Naive thymus-derived CD4-positive, alpha-beta T cell (primary cell): ENCODE measurements at regions of chr11 and their contacts with region 1.

Region 1: GRCh38 chr11:65988791-65989592 is 13.0 kb downstream of the EIF1AD start:
- DNase-seq: peak; percentile 66 to 95 (median 91)
- ATAC-seq: peak; percentile 100
- H3K4me3 ChIP-seq: no peak overlapping the region
- H3K4me3 Mint-ChIP-seq: no peak overlapping the region
- H3K27ac ChIP-seq: no peak overlapping the region
- H3K27ac Mint-ChIP-seq: peak overlapping the region; percentile 0 to 90 (median 74)
- H3K4me1 ChIP-seq: no peaks in the 10 kb centered on the region
- H3K4me1 Mint-ChIP-seq: peaks cover 5 to 7% (median 6%) of the 10 kb centered on the region in 7 donors
- H3K27me3 ChIP-seq: no peaks in the 10 kb centered on the region
- H3K27me3 Mint-ChIP-seq: no peaks in the 10 kb centered on the region

Region 2: GRCh38 chr11:65625628-65626342 is 363.2 kb before region 1 on chr11:
- CTCF ChIA-PET with region 1: no interaction called
- POLR2A ChIA-PET with region 1: no interaction called
- intact Hi-C with region 1: loop called in 1 of 2 experiments (anchors 1 kb)
- DNase-seq: peak in 8 of 9 donors; percentile 42 to 68 (median 54)
- ATAC-seq: peak; percentile 92
- H3K4me3 ChIP-seq: no peak overlapping the region
- H3K4me3 Mint-ChIP-seq: peak overlapping the region in 1 of 10 donors; percentile 41
- H3K27ac ChIP-seq: no peak overlapping the region
- H3K27ac Mint-ChIP-seq: peak overlapping the region in 4 of 9 donors; percentile 22 to 86 (median 68)
- H3K4me1 ChIP-seq: peaks cover 3 to 9% of the 10 kb centered on the region in 2 donors
- H3K4me1 Mint-ChIP-seq: peaks cover 4 to 13% (median 7%) of the 10 kb centered on the region in 7 donors
- H3K27me3 ChIP-seq: no peaks in the 10 kb centered on the region
- H3K27me3 Mint-ChIP-seq: no peaks in the 10 kb centered on the region

Region 3: DNA sequence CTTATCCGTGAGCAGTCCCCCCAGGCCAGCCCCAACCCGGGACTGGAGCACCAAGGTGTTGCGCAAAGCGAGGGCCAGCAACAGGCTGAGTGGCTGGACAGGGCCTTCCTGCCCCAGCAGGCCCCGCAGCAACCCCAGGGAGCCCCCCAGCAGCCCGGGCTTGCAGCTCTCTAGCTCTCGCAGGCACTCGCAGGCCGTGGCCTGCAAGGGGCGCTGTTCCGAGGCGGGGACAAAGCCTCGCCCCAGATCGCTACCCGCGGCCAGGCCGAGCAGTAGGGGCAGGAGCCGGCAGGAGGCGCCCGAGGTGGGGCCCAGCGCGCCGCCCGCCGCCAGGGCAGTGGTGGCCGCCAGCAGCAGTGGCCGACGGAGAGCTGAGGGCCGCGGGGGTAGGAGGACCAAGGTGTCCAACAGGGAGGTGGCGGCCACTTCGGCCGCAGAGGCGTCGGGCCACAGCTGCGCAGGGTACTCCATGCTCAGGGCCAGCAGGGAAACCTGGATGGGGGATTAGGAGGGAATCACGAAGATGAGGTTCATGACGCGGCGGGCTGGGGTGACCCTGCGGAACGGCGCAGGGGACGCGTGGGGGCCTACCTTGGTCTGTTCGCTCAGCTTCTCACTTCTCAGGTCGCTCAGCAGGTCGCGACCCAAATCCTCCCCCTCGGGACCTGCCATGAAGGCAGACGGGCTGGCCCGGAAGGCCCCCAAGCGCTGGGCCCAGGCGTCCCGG is 209.0 kb before region 1 on chr11:
- CTCF ChIA-PET with region 1: no interaction called
- POLR2A ChIA-PET with region 1: no interaction called
- intact Hi-C with region 1: loop called (anchors 1 kb)
- DNase-seq: peak; percentile 55 to 90 (median 72)
- ATAC-seq: peak; percentile 84
- H3K4me3 ChIP-seq: peak overlapping the region; percentile 74
- H3K4me3 Mint-ChIP-seq: peak overlapping the region; percentile 77 to 91 (median 86)
- H3K27ac ChIP-seq: peak overlapping the region; percentile 75
- H3K27ac Mint-ChIP-seq: peak overlapping the region in 7 of 9 donors; percentile 39 to 88 (median 73)
- H3K4me1 ChIP-seq: peaks cover 7 to 10% of the 10 kb centered on the region in 2 donors
- H3K4me1 Mint-ChIP-seq: peaks cover 5 to 20% (median 13%) of the 10 kb centered on the region in 7 donors
- H3K27me3 ChIP-seq: no peaks in the 10 kb centered on the region
- H3K27me3 Mint-ChIP-seq: peaks cover 0 to 15% (median under 1%) of the 10 kb centered on the region in 5 donors

Region 4: GRCh38 chr11:65817835-65818742 is 170.9 kb before region 1 on chr11:
- CTCF ChIA-PET with region 1: interaction called, 3 read pairs
- POLR2A ChIA-PET with region 1: interaction called, 5 read pairs
- intact Hi-C with region 1: loop called (anchors 1 kb)
- DNase-seq: peak; percentile 79 to 98 (median 89)
- ATAC-seq: peak; percentile 98
- H3K4me3 ChIP-seq: peak overlapping the region; percentile 72
- H3K4me3 Mint-ChIP-seq: peak overlapping the region; percentile 74 to 90 (median 82)
- H3K27ac ChIP-seq: peak overlapping the region; percentile 75
- H3K27ac Mint-ChIP-seq: peak overlapping the region; percentile 56 to 90 (median 76)
- H3K4me1 ChIP-seq: peaks cover 7% of the 10 kb centered on the region in 2 donors
- H3K4me1 Mint-ChIP-seq: peaks cover 6 to 21% (median 17%) of the 10 kb centered on the region in 7 donors
- H3K27me3 ChIP-seq: no peaks in the 10 kb centered on the region
- H3K27me3 Mint-ChIP-seq: peaks cover 0 to 4% (median 0%) of the 10 kb centered on the region in 5 donors

Region 5: DNA sequence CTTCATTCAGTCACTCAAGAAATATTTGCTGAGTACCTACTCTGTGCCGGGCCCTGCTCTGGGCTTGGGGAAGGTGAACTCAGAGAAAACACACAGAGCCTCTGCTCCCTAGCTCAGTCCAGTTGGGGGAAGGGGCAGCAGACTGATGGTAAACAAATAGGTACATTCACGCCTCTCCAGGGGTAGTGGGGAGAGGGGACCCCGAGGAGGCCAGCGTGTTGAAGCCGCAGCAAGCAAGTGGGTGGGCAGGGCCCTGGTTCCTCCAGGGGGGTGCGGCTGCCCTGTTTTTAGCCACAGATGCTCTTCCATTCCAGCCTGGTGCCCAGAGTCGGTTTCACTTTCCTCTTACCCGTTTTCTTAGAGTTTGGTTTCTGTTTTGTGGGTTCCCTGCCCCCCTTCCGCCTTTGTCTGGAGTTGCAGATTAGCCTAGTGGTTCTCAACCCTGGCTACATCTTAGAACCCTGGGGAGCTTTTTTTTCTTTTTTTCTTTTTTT is 61.0 kb before region 1 on chr11:
- CTCF ChIA-PET with region 1: interaction called, 3 read pairs
- POLR2A ChIA-PET with region 1: no interaction called
- intact Hi-C with region 1: loop called in 1 of 2 experiments (anchors 2 kb)
- DNase-seq: peak in 8 of 9 donors; percentile 64 to 86 (median 80)
- ATAC-seq: peak; percentile 96
- H3K4me3 ChIP-seq: peak overlapping the region; percentile 78
- H3K4me3 Mint-ChIP-seq: peak overlapping the region; percentile 74 to 89 (median 81)
- H3K27ac ChIP-seq: peak overlapping the region; percentile 81
- H3K27ac Mint-ChIP-seq: peak overlapping the region; percentile 92 to 98 (median 96)
- H3K4me1 ChIP-seq: peaks cover 20 to 30% of the 10 kb centered on the region in 2 donors
- H3K4me1 Mint-ChIP-seq: peaks cover 31 to 47% (median 36%) of the 10 kb centered on the region in 7 donors
- H3K27me3 ChIP-seq: no peaks in the 10 kb centered on the region
- H3K27me3 Mint-ChIP-seq: no peaks in the 10 kb centered on the region

Region 6: GRCh38 chr11:66022401-66023185 is 33.6 kb after region 1 on chr11:
- CTCF ChIA-PET with region 1: interaction called, 4 read pairs
- POLR2A ChIA-PET with region 1: interaction called, 3 read pairs
- intact Hi-C with region 1: loop called in 1 of 2 experiments (anchors 1 kb)
- DNase-seq: peak; percentile 52 to 89 (median 69)
- ATAC-seq: peak; percentile 92
- H3K4me3 ChIP-seq: peak overlapping the region; percentile 39
- H3K4me3 Mint-ChIP-seq: peak overlapping the region in 9 of 10 donors; percentile 4 to 73 (median 45)
- H3K27ac ChIP-seq: no peak overlapping the region
- H3K27ac Mint-ChIP-seq: peak overlapping the region in 1 of 9 donors; percentile 59
- H3K4me1 ChIP-seq: peaks cover 0 to 5% of the 10 kb centered on the region in 2 donors
- H3K4me1 Mint-ChIP-seq: peaks cover 4 to 17% (median 5%) of the 10 kb centered on the region in 7 donors
- H3K27me3 ChIP-seq: no peaks in the 10 kb centered on the region
- H3K27me3 Mint-ChIP-seq: peaks cover 0 to 9% (median 4%) of the 10 kb centered on the region in 5 donors